Ovary (tissue), 10 donors: ENCODE measurements at regions of chr16 and their contacts with region 1.

Region 1: DNA sequence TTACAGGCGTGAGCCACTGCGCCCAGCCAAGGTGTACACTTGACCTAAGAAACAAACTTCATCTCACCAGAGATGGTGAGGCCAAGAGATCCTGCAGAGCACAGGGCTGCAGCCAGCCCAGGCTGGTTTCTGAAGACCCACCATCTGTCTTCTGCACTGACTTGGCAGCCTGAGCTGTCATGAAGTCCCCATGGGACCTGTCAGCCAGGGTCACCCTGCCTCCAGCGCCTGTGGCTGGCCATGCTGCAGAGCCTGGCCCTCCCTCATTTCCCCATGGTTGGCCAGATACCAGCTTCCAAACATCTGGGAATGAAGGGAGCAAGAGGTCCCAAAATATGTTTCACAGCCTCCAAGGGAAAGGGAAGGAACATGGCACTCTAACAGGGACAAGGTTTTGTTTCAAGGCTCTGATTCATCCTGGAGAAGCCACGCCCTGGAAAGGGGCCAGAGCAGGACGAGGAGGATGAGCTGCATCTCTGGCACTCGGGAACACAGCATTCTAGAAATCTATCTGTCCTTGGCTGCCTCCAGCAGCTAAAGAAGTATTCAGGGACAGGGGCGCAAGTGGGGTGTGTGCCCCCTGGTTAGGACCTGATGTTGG is 45.3 kb downstream of the DDX19A start:
- DNase-seq: peak in 3 of 5 donors; percentile 40 to 69 (median 51)
- H3K4me3 ChIP-seq: no peak overlapping the region
- H3K27ac ChIP-seq: no peak overlapping the region
- H3K4me1 ChIP-seq: no peaks in the 10 kb centered on the region
- H3K27me3 ChIP-seq: no peaks in the 10 kb centered on the region
- CTCF ChIP-seq: no peak
- EP300 ChIP-seq: no peak
- POLR2A ChIP-seq: no peak

Region 2: GRCh38 chr16:70438969-70439862 is 47.2 kb after region 1 on chr16 and contains the start of gene ST3GAL2:
- intact Hi-C with region 1: loop called in 1 of 4 experiments (anchors 5 kb)
- DNase-seq: peak; percentile 95 to 97 (median 96)
- H3K4me3 ChIP-seq: peak within 1 kb of the TSS; percentile 81
- H3K27ac ChIP-seq: peak within 1 kb of the TSS; percentile 30 to 70
- H3K4me1 ChIP-seq: peaks cover 7% of the 10 kb centered on the region
- H3K27me3 ChIP-seq: no peaks in the 10 kb centered on the region
- CTCF ChIP-seq: peak in 1 of 3 donors; percentile 22
- EP300 ChIP-seq: no peak
- POLR2A ChIP-seq: no peak
- total RNA-seq, gene ST3GAL2: 12.3 to 49.7 (median 25.0) TPM

Region 3: DNA sequence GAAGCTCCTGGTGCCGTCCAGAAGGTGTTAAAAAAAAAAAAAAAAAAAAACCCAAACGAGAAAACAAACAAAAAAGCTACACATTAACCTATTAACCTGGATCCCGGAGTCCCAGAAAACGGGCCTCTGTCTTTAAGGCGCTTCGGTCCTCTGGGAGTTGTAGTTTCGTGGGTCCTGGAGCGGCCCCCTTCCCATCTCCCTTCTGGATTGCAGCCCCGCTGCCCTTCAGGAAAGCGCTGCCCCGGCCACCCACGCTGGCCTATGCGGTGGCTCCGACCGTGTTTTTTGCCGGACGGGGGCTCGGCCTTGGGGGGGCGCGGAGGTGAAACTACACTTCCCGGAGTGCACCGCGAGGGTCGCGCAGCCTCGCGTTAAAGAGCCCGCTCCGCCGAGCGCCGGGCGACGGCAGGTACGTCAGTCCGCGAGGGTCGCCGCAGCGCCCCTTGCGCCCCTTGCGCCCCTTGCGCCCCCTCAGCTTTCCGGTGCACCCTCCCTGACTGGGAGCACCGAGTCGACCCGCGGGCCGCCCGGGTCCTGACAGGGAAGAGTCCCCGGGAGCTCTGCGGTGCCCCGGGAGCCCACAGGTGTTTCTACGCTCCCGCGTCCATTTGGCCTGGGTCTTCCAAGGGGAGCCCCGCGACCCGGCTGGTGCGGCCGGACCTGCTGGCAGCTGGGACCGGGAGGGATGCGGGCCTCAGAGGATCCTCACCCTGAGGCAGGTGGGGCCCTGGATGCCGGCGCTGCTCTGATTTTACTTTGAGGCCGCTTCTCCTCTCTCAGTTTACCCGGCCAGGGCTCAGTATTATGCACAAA is 62.4 kb after region 1 on chr16 and contains the start of gene FCSK:
- intact Hi-C with region 1: loop called in 1 of 4 experiments (anchors 5 kb)
- DNase-seq: peak; percentile 67 to 82 (median 69)
- H3K4me3 ChIP-seq: peak within 1 kb of the TSS; percentile 71
- H3K27ac ChIP-seq: peak within 1 kb of the TSS; percentile 94 to 96
- H3K4me1 ChIP-seq: peaks cover 7% of the 10 kb centered on the region
- H3K27me3 ChIP-seq: no peaks in the 10 kb centered on the region
- CTCF ChIP-seq: peak in 1 of 3 donors; percentile 13
- EP300 ChIP-seq: no peak
- POLR2A ChIP-seq: no peak
- total RNA-seq, gene FCSK: 15.0 to 29.4 (median 20.4) TPM